CD14-positive monocyte (primary cell): ENCODE measurements at regions of chr22 and their contacts with region 1.

Region 1: GRCh38 chr22:46116491-46116958 is 33.8 kb upstream of the PPARA start:
- DNase-seq: peak; percentile 87 to 90 (median 87)
- H3K4me3 ChIP-seq: no peak overlapping the region
- H3K4me3 Mint-ChIP-seq: no peak overlapping the region
- H3K27ac ChIP-seq: no peak overlapping the region
- H3K27ac Mint-ChIP-seq: no peak overlapping the region
- H3K4me1 ChIP-seq: peaks cover 8 to 22% of the 10 kb centered on the region in 2 donors
- H3K4me1 Mint-ChIP-seq: peaks cover 6% of the 10 kb centered on the region
- H3K27me3 ChIP-seq: no peaks in the 10 kb centered on the region
- H3K27me3 Mint-ChIP-seq: peaks cover 0 to 4% (median 3%) of the 10 kb centered on the region in 3 donors
- CTCF ChIP-seq: peak; percentile 80

Region 2: DNA sequence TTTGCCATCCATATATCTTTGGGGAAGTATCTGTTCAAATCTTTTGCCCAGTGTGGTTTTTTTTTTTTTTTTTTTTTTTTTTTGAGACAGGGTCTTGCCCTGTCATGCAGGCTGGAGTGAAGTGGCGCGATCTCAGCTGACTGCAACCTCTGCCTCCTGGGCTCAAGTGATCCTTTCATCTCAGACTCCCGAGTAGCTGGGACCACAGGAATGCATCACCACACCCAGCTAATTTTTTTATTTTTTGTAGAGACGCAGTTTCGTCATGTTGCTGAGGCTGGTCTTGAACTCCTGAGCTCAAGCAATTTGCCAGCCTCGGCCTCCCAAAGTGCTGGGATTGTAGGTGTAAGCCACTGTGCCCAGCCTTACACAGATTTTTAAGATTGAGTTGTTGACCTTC is 811.6 kb before region 1 on chr22:
- intact Hi-C with region 1: no loop called
- DNase-seq: no peak
- H3K4me3 ChIP-seq: no peak overlapping the region
- H3K4me3 Mint-ChIP-seq: no peak overlapping the region
- H3K27ac ChIP-seq: no peak overlapping the region
- H3K27ac Mint-ChIP-seq: no peak overlapping the region
- H3K4me1 ChIP-seq: peaks cover 36 to 44% of the 10 kb centered on the region in 2 donors
- H3K4me1 Mint-ChIP-seq: peaks cover 46% of the 10 kb centered on the region
- H3K27me3 ChIP-seq: no peaks in the 10 kb centered on the region
- H3K27me3 Mint-ChIP-seq: peaks cover 0 to 1% (median 0%) of the 10 kb centered on the region in 3 donors
- CTCF ChIP-seq: no peak

Region 3: GRCh38 chr22:45584121-45584570 is 532.4 kb before region 1 on chr22:
- intact Hi-C with region 1: loop called (anchors 5 to 10 kb)
- DNase-seq: peak; percentile 11 to 27 (median 25)
- H3K4me3 ChIP-seq: peak overlapping the region in 1 of 3 experiments; percentile 21
- H3K4me3 Mint-ChIP-seq: peak overlapping the region; percentile 52 to 77
- H3K27ac ChIP-seq: no peak overlapping the region
- H3K27ac Mint-ChIP-seq: peak overlapping the region in 1 of 7 donors; percentile 77
- H3K4me1 ChIP-seq: peaks cover 24 to 30% of the 10 kb centered on the region in 2 donors
- H3K4me1 Mint-ChIP-seq: peaks cover 43% of the 10 kb centered on the region
- H3K27me3 ChIP-seq: no peaks in the 10 kb centered on the region
- H3K27me3 Mint-ChIP-seq: peaks cover 5 to 7% (median 5%) of the 10 kb centered on the region in 3 donors
- CTCF ChIP-seq: no peak

Region 4: DNA sequence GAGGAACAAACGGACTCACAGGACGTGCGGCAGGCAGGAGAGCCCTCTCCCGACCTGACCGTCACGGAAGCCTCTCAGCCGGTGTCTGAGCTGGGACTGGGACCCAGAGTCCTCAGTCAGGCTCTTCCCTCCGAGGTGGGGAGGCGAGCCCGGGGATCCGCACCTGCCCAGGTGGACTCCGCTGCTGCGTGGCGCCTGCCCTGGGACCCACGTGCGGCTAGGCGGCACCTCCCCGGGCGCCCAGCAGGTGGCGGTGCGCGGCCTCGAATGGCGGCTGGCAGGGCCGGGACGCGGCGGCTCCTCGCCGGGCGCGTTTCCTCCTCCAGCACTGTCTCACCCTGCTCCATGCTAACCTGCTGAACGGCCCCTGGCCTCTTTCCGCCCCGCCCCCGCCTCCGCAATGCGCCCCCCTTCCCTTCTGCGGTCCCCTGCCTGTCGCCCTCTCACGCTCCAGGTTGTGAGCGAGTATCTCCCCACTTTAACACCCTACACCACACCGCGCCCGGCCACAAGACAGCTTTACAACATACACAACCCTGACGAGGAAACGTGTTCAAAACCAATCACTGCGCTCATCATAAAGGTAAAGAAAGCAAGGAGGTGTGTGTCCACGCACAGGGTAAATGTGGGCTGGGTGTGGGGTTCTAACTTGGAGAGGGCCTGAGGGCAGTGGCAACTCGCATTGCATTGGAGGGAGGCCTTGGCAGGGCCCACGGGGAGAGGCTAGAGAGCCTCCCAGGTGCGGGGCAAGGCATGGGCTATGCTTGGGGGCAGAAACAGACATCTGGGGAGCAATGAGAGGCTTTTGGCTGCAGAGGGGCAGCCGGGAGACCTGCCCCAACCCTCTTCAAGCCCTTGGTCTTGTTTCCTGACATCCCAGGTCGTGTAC is 470.8 kb before region 1 on chr22:
- intact Hi-C with region 1: loop called (anchors 2 to 10 kb)
- DNase-seq: peak; percentile 35 to 59 (median 59)
- H3K4me3 ChIP-seq: no peak overlapping the region
- H3K4me3 Mint-ChIP-seq: peak overlapping the region in 1 of 2 donors; percentile 80
- H3K27ac ChIP-seq: no peak overlapping the region
- H3K27ac Mint-ChIP-seq: no peak overlapping the region
- H3K4me1 ChIP-seq: peaks cover 5 to 8% of the 10 kb centered on the region in 2 donors
- H3K4me1 Mint-ChIP-seq: peaks cover 13% of the 10 kb centered on the region
- H3K27me3 ChIP-seq: peaks cover 4 to 48% of the 10 kb centered on the region in 2 donors
- H3K27me3 Mint-ChIP-seq: peaks cover 46 to 72% (median 68%) of the 10 kb centered on the region in 3 donors
- CTCF ChIP-seq: peak; percentile 98

Region 5: GRCh38 chr22:45863981-45864751 is 252.4 kb before region 1 on chr22:
- intact Hi-C with region 1: loop called (anchors 5 to 10 kb)
- DNase-seq: peak; percentile 23 to 38 (median 30)
- H3K4me3 ChIP-seq: no peak overlapping the region
- H3K4me3 Mint-ChIP-seq: peak overlapping the region in 1 of 2 donors; percentile 76
- H3K27ac ChIP-seq: no peak overlapping the region
- H3K27ac Mint-ChIP-seq: no peak overlapping the region
- H3K4me1 ChIP-seq: no peaks in the 10 kb centered on the region
- H3K4me1 Mint-ChIP-seq: no peaks in the 10 kb centered on the region
- H3K27me3 ChIP-seq: peaks cover 23 to 59% of the 10 kb centered on the region in 2 donors
- H3K27me3 Mint-ChIP-seq: peaks cover 49 to 67% (median 56%) of the 10 kb centered on the region in 3 donors
- CTCF ChIP-seq: peak; percentile 93